PC-9 (cell line): ENCODE measurements at regions of chr3 and their contacts with region 1.

Region 1: GRCh38 chr3:79490165-79491028 is 277.4 kb downstream of the ROBO1 start:
- DNase-seq: no peak
- H3K4me3 ChIP-seq: no peak overlapping the region
- H3K27ac ChIP-seq: no peak overlapping the region
- H3K4me1 ChIP-seq: no peaks in the 10 kb centered on the region
- H3K27me3 ChIP-seq: no peaks in the 10 kb centered on the region
- CTCF ChIP-seq: no peak; the same call in 1 of the 2 replicates

Region 2: DNA sequence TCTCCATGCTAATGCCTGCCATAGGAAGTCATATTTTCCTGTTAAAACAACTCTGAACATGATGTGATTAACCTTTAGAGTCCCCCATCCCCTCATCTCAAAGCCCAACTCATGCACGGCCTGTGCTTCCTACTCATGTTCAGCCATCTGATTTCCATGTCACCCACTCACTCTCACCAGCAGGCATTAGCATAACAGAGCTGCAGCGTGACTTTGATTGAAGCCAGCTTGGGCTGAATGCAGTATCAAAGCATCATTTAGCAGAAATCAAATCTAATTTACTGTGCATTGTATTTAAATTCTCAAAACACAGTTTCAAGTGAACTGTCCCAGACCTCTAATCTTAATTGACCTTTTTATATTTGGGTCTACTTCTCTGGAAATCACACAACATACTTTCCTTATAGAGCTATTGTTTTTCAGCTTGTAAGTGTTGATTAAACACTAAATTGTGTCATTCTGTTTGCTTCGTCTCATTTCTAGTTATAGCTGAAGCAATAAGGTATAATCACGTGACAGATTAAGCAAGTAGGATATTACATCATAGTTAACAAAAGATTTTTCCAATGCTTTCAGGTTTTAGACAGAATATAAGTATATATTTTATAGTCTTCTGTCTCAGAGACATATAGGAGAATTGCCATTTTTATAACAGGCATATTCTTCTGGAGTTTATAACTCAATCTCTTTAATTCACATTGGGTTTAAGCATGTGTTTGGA is 1949.0 kb before region 1 on chr3:
- CTCF ChIA-PET with region 1: no interaction called
- POLR2A ChIA-PET with region 1: interaction called, 22 read pairs
- intact Hi-C with region 1: no loop called
- DNase-seq: no peak
- H3K4me3 ChIP-seq: no peak overlapping the region
- H3K27ac ChIP-seq: no peak overlapping the region
- H3K4me1 ChIP-seq: no peaks in the 10 kb centered on the region
- H3K27me3 ChIP-seq: no peaks in the 10 kb centered on the region
- CTCF ChIP-seq: no peak

Region 3: DNA sequence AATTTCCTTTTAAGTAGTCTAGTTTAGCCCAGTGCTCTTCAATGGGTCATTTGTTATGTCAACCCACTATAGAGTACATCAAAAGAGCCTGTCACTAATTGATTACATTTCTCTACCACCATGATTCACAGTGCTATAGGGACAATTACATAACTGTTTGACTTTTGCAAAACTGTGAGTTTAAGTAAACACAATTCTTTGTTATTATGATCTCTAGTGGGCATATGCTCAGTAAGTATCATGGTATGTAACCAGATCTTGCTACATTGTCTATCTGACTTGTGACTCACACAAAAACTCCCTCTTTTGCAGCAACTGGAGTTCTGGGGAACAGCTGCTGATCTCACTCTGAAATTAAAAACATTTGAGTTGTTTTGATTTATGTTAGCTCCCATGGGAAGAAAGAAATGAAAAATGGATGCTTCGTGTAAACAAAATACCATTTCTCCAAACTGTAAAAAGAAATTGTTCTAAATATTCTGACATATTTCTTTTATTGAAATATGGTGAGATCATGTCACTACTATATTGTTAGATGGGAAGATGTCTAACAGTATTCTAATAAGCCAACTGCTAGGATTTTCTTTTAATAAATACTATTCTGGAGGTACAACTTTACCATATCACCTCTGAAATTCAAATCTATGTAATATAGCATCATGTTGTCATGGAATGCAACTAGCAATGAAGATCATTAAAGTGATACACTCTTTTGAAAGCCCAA is 193.0 kb before region 1 on chr3:
- CTCF ChIA-PET with region 1: no interaction called
- POLR2A ChIA-PET with region 1: no interaction called
- intact Hi-C with region 1: no loop called
- DNase-seq: peak; percentile 5 to 77
- H3K4me3 ChIP-seq: no peak overlapping the region
- H3K27ac ChIP-seq: no peak overlapping the region; the same call in 1 of the 2 replicates
- H3K4me1 ChIP-seq: peaks cover 7% of the 10 kb centered on the region; the same call in 1 of the 2 replicates
- H3K27me3 ChIP-seq: no peaks in the 10 kb centered on the region
- CTCF ChIP-seq: no peak

Region 4: DNA sequence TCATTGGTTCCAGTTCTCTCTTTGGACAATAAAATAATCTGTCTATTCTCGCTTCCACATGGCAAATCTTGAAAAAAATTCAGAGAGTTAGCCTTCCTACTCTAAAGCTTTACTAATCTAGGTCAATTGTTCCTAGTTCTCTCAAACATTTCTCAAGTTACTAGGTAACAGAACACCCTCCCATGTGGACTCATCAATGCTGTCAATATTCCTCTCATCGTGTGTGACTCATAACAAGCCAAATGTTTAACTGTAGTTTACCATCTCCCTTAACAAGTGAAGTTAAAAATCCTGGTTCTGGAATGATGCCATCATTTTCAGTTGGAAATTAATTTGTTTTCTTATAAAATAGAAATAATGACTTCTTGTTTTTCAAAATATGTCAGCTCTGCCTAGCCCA is 161.2 kb before region 1 on chr3:
- CTCF ChIA-PET with region 1: no interaction called
- POLR2A ChIA-PET with region 1: interaction called, 13 read pairs
- intact Hi-C with region 1: no loop called
- DNase-seq: no peak
- H3K4me3 ChIP-seq: no peak overlapping the region
- H3K27ac ChIP-seq: no peak overlapping the region
- H3K4me1 ChIP-seq: no peaks in the 10 kb centered on the region
- H3K27me3 ChIP-seq: no peaks in the 10 kb centered on the region
- CTCF ChIP-seq: no peak

Region 5: GRCh38 chr3:79406175-79406574 is 84.2 kb before region 1 on chr3:
- CTCF ChIA-PET with region 1: no interaction called
- POLR2A ChIA-PET with region 1: interaction called, 31 read pairs
- intact Hi-C with region 1: no loop called
- DNase-seq: no peak
- H3K4me3 ChIP-seq: no peak overlapping the region
- H3K27ac ChIP-seq: no peak overlapping the region
- H3K4me1 ChIP-seq: no peaks in the 10 kb centered on the region
- H3K27me3 ChIP-seq: no peaks in the 10 kb centered on the region
- CTCF ChIP-seq: no peak

Region 6: GRCh38 chr3:79810581-79810980 is 320.2 kb after region 1 on chr3:
- CTCF ChIA-PET with region 1: no interaction called
- POLR2A ChIA-PET with region 1: no interaction called
- intact Hi-C with region 1: no loop called
- DNase-seq: no peak
- H3K4me3 ChIP-seq: no peak overlapping the region
- H3K27ac ChIP-seq: no peak overlapping the region
- H3K4me1 ChIP-seq: no peaks in the 10 kb centered on the region
- H3K27me3 ChIP-seq: no peaks in the 10 kb centered on the region
- CTCF ChIP-seq: no peak